ENCODE measurements at regions of chr1 and their contacts with region 1.

Region 1: DNA sequence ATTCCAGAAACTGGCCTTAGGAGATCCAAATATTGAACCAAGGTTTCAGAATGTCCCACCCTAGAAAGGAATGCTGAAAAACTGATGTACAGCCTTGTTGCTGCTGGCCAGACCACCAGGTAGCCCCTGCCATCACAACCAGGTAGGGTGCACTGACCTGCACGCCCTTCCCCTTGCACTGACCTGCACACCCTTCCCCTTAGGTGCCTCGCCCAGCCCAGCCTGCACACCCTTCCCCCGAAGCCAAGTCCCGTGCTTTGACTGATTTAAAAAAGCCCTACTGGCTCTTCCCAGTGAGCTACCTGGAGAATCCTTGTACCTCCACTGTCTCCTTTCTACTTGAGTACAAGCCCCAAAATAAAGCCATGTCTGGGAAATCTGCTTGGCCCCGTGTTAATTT is 26.3 kb upstream of the C1orf198 start:
- DNase-seq: no peak
- ATAC-seq: no peak
- H3K4me3 ChIP-seq: no peak overlapping the region
- H3K27ac ChIP-seq: no peak overlapping the region
- H3K4me1 ChIP-seq: no peaks in the 10 kb centered on the region
- H3K27me3 ChIP-seq: peaks cover 2% of the 10 kb centered on the region; the same call in 1 of the 2 replicates
- CTCF ChIP-seq: no peak

Region 2: DNA sequence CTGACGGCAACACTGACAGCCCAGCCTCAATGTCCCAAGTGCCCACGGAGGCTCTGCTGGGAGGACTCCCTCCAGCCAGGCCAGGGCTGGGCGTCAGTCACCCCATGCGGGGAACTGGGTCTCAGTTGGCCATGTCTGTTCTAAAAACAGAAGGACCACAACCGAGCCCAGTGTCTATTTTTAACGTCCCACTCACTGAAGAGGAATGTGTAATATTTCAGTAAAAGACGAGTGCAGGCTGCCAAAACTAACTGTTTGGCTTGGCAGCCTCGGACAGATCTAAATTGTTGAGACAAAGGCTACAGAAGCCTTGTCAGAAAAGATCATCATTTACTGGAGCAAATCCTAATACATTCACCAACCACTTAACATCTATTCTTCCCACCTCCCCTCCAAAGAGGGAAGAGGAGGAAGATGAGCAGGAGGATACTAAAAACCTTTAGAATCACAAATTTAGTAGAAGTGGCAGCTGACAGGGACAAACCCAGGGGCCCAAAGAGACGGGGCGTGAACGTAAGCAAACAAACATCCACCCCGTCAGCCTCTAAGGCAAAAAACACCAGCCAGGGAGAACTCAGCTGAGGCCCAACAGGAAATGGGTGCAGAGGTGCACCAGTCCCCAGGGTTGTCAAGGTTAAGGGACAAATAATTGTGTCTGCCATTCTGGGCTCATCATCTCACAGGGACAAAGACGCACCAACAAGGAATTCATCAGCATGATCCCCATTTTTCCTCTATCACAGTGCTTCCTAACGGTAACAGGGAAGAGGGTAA is 45.0 kb before region 1 on chr1:
- CTCF ChIA-PET with region 1: no interaction called
- POLR2A ChIA-PET with region 1: no interaction called
- in situ Hi-C with region 1: no loop called
- intact Hi-C with region 1: no loop called
- DNase-seq: no peak
- ATAC-seq: peak; percentile 79
- H3K4me3 ChIP-seq: 0 out of 4 replicates have a peak overlapping the region, but pooled peaks of 1 of the 2 experiments have one; percentile 8
- H3K27ac ChIP-seq: peak overlapping the region; percentile 48
- H3K4me1 ChIP-seq: peaks cover 26% of the 10 kb centered on the region
- H3K27me3 ChIP-seq: no peaks in the 10 kb centered on the region
- CTCF ChIP-seq: no peak

Region 3: GRCh38 chr1:230867903-230868735 is 26.5 kb before region 1 on chr1 and contains the start of gene C1orf198:
- CTCF ChIA-PET with region 1: no interaction called
- POLR2A ChIA-PET with region 1: no interaction called
- in situ Hi-C with region 1: no loop called
- intact Hi-C with region 1: loop called (anchors 1 kb)
- DNase-seq: no peak
- ATAC-seq: peak; percentile 92
- H3K4me3 ChIP-seq: peak within 1 kb of the TSS; percentile 84 to 89
- H3K27ac ChIP-seq: peak within 1 kb of the TSS; percentile 87
- H3K4me1 ChIP-seq: peaks cover 30% of the 10 kb centered on the region
- H3K27me3 ChIP-seq: no peaks in the 10 kb centered on the region
- CTCF ChIP-seq: no peak
- total RNA-seq, gene C1orf198: 33.6 TPM